ENCODE measurements at regions of chr2 and their contacts with region 1.

Region 1: DNA sequence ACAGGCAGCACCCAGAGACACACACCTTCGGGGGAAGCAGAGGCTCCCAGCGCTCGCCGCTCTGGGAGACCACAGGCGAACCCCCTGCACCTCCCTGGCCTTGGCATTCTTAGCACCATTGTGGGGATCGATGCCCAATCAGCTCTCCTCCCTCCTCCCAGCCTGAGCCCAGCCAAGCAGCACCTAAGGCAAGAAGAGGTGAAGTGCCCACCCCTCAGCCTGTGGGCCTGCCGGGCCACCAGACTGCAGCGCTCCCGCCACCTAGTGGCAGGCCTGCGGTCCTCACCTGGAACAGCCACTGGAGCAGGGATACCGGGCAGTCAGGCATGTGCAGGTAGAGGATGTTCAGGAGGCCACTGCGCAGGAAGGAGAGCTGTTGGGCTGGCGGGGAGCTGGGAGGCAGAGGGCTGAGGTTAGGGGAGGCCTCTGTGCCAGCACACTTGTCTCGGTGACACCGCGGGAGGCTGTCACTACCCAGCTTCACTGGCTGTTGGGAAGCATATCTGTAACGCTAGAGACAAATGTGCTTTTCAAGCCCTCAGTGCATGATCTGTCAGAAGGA is 35.2 kb downstream of the FAM178B start:
- DNase-seq: no peak
- ATAC-seq: peak; percentile 91
- H3K4me3 ChIP-seq: no peak overlapping the region
- H3K27ac ChIP-seq: no peak overlapping the region
- H3K4me1 ChIP-seq: peaks cover 11% of the 10 kb centered on the region
- H3K27me3 ChIP-seq: no peaks in the 10 kb centered on the region; a peak in 1 of 4 replicates
- CTCF ChIP-seq: peak; percentile 85 to 96 (median 92)
- EP300 ChIP-seq: no peak
- POLR2A ChIP-seq: no peak
- RAD21 ChIP-seq: peak; percentile 77

Region 2: DNA sequence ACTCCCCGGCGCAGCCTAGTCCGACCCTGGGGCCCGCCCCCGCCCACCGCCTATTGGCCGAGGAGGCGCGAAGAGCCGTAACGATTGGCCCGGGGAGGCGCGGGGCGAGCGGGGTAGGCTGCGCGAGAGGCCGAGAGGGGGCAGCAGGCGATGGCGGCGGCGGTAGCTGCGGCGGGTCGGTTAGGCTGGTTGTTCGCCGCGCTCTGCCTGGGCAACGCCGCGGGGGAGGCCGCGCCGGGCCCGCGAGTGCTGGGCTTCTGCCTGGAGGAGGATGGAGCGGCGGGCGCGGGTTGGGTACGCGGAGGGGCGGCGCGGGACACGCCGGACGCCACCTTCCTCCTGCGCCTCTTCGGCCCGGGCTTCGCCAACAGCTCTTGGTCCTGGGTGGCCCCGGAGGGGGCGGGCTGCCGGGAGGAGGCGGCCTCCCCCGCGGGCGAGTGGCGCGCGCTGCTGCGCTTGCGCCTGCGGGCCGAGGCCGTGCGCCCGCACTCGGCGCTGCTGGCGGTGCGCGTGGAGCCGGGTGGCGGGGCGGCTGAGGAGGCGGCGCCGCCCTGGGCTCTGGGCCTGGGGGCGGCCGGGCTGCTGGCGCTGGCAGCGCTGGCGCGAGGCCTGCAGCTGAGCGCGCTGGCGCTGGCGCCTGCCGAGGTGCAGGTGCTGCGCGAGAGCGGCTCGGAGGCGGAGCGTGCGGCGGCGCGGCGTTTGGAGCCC is 134.9 kb before region 1 on chr2 and contains the start of gene CNNM3:
- CTCF ChIA-PET with region 1: interaction called, 12 read pairs
- POLR2A ChIA-PET with region 1: no interaction called
- RAD21 ChIA-PET with region 1: interaction called, 7 read pairs
- SMC1A ChIA-PET with region 1: interaction called, 4 read pairs
- in situ Hi-C with region 1: no loop called
- intact Hi-C with region 1: no loop called
- DNase-seq: no peak
- ATAC-seq: peak; percentile 97
- H3K4me3 ChIP-seq: peak within 1 kb of the TSS; percentile 96
- H3K27ac ChIP-seq: peak within 1 kb of the TSS; percentile 50
- H3K4me1 ChIP-seq: peaks cover 12% of the 10 kb centered on the region
- H3K27me3 ChIP-seq: no peaks in the 10 kb centered on the region
- CTCF ChIP-seq: peak; percentile 32 to 52 (median 52); a peak in 5 of 6 replicates
- EP300 ChIP-seq: no peak
- POLR2A ChIP-seq: peak; percentile 94
- RAD21 ChIP-seq: no peak
- polyA plus RNA-seq, gene CNNM3: 0.72 to 1.9 TPM

Region 3: GRCh38 chr2:96868555-96869280 is 82.5 kb before region 1 on chr2:
- CTCF ChIA-PET with region 1: interaction called, 22 read pairs
- POLR2A ChIA-PET with region 1: interaction called, 8 read pairs
- RAD21 ChIA-PET with region 1: interaction called, 12 read pairs
- SMC1A ChIA-PET with region 1: interaction called, 25 read pairs
- in situ Hi-C with region 1: no loop called
- intact Hi-C with region 1: no loop called
- DNase-seq: peak; percentile 33
- ATAC-seq: peak; percentile 78
- H3K4me3 ChIP-seq: peak overlapping the region; percentile 95
- H3K27ac ChIP-seq: peak overlapping the region; percentile 86
- H3K4me1 ChIP-seq: peaks cover 23% of the 10 kb centered on the region
- H3K27me3 ChIP-seq: no peaks in the 10 kb centered on the region; a peak in 1 of 4 replicates
- CTCF ChIP-seq: peak; percentile 59 to 62 (median 60); a peak in 5 of 6 replicates
- EP300 ChIP-seq: no peak
- POLR2A ChIP-seq: peak; percentile 72
- RAD21 ChIP-seq: peak; percentile 38

Region 4: DNA sequence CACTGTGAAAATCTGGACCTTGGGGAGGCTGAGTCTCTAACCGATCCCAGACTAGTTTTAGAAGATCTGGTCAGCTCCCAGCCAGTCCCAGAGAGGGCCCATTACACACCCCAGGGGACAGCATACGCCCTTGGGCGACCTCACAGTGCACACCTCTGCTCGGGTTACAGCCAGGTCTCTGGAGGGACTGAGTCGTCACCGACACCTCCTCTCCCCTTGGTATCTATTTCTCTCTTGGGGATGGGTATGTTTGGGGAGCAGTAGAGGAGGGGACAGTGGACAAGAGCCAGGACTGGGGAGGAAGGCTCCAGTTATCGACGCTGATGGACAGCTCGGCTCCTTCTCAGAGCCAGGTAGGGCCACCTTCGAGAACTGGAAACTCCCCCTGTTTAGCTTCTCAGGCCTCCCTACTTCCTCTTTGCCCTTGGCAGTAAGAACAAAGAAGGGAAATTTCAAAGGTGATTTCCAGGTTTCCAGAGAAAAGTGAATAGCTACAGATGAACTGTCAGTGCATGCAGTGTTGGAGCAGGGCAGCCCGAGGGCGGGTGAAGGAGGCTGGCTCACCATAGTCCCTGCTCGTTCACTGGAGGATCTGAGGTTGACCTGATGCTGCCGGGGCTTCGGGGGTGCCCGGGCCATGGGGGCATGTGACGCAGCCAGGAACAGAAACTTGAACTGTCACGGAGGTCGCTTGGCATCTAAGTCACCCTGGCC is 76.9 kb before region 1 on chr2:
- CTCF ChIA-PET with region 1: interaction called, 22 read pairs
- POLR2A ChIA-PET with region 1: interaction called, 8 read pairs
- RAD21 ChIA-PET with region 1: interaction called, 9 read pairs
- SMC1A ChIA-PET with region 1: interaction called, 25 read pairs
- in situ Hi-C with region 1: no loop called
- intact Hi-C with region 1: no loop called
- DNase-seq: peak; percentile 76
- ATAC-seq: peak; percentile 82
- H3K4me3 ChIP-seq: peak overlapping the region; percentile 26; the same call in 1 of the 2 replicates
- H3K27ac ChIP-seq: peak overlapping the region; percentile 74
- H3K4me1 ChIP-seq: peaks cover 37% of the 10 kb centered on the region
- H3K27me3 ChIP-seq: no peaks in the 10 kb centered on the region; a peak in 1 of 4 replicates
- CTCF ChIP-seq: no peak
- EP300 ChIP-seq: peak in 1 of 2 experiments; percentile 58; a peak in 2 of 4 replicates
- POLR2A ChIP-seq: peak; percentile 52
- RAD21 ChIP-seq: no peak

Region 5: GRCh38 chr2:96940001-96940615 is 11.1 kb before region 1 on chr2:
- CTCF ChIA-PET with region 1: interaction called, 21 read pairs
- POLR2A ChIA-PET with region 1: no interaction called
- RAD21 ChIA-PET with region 1: interaction called, 3 read pairs
- SMC1A ChIA-PET with region 1: interaction called, 3 read pairs
- in situ Hi-C with region 1: no loop called
- intact Hi-C with region 1: no loop called
- DNase-seq: no peak
- ATAC-seq: no peak
- H3K4me3 ChIP-seq: no peak overlapping the region
- H3K27ac ChIP-seq: no peak overlapping the region
- H3K4me1 ChIP-seq: no peaks in the 10 kb centered on the region
- H3K27me3 ChIP-seq: no peaks in the 10 kb centered on the region; a peak in 1 of 4 replicates
- CTCF ChIP-seq: no peak
- EP300 ChIP-seq: no peak
- POLR2A ChIP-seq: no peak
- RAD21 ChIP-seq: no peak